Panc1 (cell line): ENCODE measurements at regions of chr14 and their contacts with region 1.

Region 1: GRCh38 chr14:68951042-68951914 is 27.8 kb downstream of the ACTN1 start:
- DNase-seq: peak; percentile 78
- ATAC-seq: peak; percentile 89
- H3K4me3 ChIP-seq: no peak overlapping the region
- H3K27ac ChIP-seq: peak overlapping the region; percentile 97
- H3K4me1 ChIP-seq: peaks cover 87% of the 10 kb centered on the region
- H3K27me3 ChIP-seq: no peaks in the 10 kb centered on the region
- CTCF ChIP-seq: no peak

Region 2: DNA sequence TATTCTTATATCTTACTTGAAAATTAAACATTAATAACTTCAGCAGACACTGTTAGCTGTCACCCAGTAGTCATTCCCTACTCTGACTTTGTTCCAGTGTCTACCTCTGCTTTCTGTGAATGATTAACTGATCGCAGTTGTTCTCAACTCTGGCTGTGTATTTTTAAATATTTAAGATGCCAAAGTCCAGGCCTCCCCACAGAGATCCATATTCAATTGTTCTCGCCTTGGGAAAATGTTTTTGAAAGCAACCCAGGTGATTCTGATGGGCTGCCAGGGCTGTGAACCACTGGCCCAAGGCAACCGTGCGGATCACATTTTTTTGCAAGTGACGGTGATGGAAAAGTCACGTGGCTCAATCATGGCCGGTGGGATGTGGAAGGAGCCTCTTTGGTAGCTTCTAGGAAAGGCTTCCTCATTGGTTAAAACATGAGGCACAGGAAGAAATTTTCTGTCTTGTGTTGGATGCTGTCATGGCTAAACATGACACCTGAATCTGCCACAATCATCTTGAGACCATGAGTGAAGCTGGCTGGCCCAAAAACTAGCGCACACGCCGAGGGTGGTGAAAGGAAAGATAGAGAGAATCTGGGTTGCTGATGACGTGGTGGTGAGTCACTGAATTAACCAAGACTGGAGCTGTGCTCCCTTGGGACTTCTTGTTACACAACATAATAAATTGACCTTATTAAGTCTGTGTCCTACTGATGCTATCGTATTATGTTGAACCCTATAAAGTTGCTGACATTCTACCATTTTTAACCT is 1212.4 kb before region 1 on chr14:
- CTCF ChIA-PET with region 1: no interaction called
- POLR2A ChIA-PET with region 1: interaction called, 13 read pairs
- in situ Hi-C with region 1: no loop called
- intact Hi-C with region 1: no loop called
- DNase-seq: no peak
- ATAC-seq: no peak
- H3K4me3 ChIP-seq: no peak overlapping the region
- H3K27ac ChIP-seq: no peak overlapping the region
- H3K4me1 ChIP-seq: no peaks in the 10 kb centered on the region
- H3K27me3 ChIP-seq: no peaks in the 10 kb centered on the region
- CTCF ChIP-seq: no peak

Region 3: GRCh38 chr14:68979021-68979782 is 27.9 kb after region 1 on chr14 and contains the start of gene ACTN1:
- CTCF ChIA-PET with region 1: no interaction called
- POLR2A ChIA-PET with region 1: interaction called, 11 read pairs
- in situ Hi-C with region 1: no loop called
- intact Hi-C with region 1: no loop called
- DNase-seq: peak; percentile 66
- ATAC-seq: peak; percentile 91
- H3K4me3 ChIP-seq: peak within 1 kb of the TSS; percentile 82
- H3K27ac ChIP-seq: peak within 1 kb of the TSS; percentile 90
- H3K4me1 ChIP-seq: peaks cover 24% of the 10 kb centered on the region
- H3K27me3 ChIP-seq: no peaks in the 10 kb centered on the region
- CTCF ChIP-seq: no peak
- total RNA-seq, gene ACTN1: 212 TPM

Region 4: DNA sequence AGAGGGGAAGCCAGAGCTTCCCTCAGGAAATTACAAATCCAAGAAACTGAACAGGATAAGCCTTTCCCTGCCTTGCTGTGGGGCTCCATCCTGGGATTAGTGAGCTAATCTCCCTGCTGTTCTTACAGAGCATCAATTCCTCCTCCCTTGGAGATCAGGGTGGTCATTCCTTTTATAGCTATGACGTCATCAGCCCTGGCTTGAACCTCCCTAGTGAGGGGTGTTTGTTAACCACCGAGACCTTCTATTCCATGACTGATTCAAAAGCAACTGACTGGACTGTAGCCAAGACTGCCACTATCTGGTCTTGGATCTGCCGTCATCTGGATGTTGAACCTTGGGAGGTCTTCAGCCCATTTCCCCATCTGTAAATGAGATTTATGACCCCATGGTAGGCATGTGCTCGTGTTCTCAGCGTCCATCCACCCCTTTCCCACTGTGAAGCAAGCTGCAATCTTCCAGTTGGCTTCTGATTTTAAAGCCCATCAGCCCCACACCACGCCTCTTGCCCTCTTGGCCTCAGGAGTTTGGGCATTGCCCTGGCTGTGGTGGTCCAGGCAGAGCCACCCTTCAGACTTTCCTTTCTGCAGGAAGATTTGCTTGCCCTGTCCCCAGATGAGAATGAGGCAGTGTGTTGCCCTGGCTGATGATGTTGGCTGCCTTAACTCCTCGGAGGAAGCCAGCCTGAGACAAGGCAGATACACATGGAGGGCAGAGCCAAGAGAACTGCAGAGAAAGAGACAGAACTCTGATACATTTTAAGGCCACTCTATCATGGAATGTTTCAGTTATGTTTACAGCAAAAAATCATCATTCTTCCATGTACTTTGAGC is 87.4 kb after region 1 on chr14:
- CTCF ChIA-PET with region 1: interaction called, 12 read pairs
- POLR2A ChIA-PET with region 1: no interaction called
- in situ Hi-C with region 1: no loop called
- intact Hi-C with region 1: no loop called
- DNase-seq: no peak
- ATAC-seq: peak; percentile 55; the same call in 1 of the 2 replicates
- H3K4me3 ChIP-seq: no peak overlapping the region
- H3K27ac ChIP-seq: no peak overlapping the region
- H3K4me1 ChIP-seq: no peaks in the 10 kb centered on the region
- H3K27me3 ChIP-seq: no peaks in the 10 kb centered on the region
- CTCF ChIP-seq: no peak